Ovary (tissue), 10 donors: ENCODE measurements at regions of chr3 and their contacts with region 1.

Region 1: DNA sequence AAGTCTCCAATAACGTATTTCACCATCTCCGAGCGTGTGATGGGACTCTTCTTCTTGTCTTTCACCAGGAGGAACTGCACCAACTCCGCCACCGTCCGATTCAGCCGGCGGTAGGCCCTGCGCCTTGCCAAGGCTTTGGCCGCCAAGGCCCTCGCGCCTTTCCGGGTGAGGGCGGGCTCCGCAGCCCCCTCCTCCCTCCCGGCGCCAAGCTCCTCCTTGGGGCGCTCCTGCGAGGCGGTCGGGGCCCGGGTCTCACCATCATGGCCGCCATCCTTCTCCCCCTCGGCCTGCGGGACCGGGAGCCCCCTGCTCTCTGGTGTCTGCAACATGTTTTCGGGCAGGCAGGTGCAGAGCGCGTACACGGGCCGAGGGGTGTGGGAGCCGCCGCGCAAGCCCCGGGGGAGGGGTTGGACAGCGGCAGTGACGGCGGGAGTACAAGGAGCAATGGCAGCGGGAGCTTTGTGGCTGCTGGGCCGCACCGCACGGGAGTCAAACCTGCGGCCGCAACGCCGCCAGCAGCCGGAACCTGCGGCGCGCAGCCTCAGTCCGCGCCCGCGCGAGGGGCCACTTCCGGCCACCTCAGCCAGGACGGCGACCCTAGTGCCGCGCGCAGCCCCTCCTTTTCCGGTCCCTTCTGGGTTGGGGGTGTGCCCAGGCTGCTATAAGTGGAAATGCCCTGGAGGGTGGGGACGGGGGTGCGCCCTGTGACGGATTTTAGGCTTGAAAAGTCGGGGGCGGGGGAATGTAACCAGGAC is at the start of gene MAGEF1:
- DNase-seq: peak; percentile 79 to 88 (median 84)
- H3K4me3 ChIP-seq: peak within 1 kb of the TSS; percentile 68
- H3K27ac ChIP-seq: peak within 1 kb of the TSS; percentile 88 to 89
- H3K4me1 ChIP-seq: peaks cover 15% of the 10 kb centered on the region
- H3K27me3 ChIP-seq: no peaks in the 10 kb centered on the region
- CTCF ChIP-seq: peak in 2 of 3 donors; percentile 28
- EP300 ChIP-seq: no peak
- POLR2A ChIP-seq: peak; percentile 62
- total RNA-seq, gene MAGEF1: 28.3 to 48.6 (median 39.7) TPM

Region 2: DNA sequence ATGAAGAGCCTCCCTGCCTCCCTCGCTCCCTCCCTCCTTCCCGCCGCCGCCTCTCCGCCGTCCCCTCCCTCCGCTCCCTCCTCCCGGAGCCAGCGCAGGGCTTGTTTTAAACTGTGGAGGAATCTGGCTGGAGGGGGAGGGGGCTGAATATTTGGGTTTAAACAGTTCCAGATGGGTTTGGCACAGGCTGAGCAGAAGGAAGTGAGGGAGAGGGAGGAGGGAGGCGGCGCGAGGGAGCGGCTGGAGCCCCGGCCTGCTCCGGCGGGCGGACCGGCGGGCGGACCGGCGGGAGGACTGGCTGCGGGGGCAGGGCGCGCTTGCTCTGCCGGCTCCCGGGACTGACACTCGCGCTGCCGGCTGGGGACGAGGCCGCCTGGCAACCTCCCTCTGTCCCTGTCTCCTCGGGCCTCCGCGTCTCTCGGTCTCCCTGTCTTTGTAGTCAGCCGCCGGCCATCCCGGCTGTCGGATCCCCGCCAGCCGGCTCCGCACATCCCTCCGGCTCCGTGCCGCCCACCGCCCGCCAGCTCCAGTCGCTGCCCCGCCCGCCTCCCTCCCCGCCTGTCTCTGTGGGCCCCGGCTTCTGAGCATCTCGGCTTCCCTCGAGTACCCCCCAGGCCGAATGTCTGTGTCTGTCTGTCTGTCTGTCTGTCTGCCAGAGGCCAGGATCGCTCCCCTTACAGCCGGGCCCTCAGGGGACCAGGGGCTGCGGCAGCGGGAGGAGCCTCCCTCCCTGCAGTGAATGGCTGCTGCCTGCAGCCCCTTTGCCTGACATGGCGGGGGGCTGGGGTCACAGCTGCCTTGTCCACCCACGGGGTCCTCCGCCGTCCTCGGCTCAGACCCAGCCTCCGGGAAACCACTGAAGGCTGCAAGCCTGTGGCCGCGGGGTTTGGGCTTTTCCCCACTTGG is 142.5 kb before region 1 on chr3:
- intact Hi-C with region 1: loop called in 1 of 4 experiments (anchors 5 kb)
- DNase-seq: peak; percentile 91 to 95 (median 93)
- H3K4me3 ChIP-seq: peak overlapping the region; percentile 51
- H3K27ac ChIP-seq: peak overlapping the region in 1 of 2 donors; percentile 66
- H3K4me1 ChIP-seq: peaks cover 39% of the 10 kb centered on the region
- H3K27me3 ChIP-seq: no peaks in the 10 kb centered on the region
- CTCF ChIP-seq: no peak
- EP300 ChIP-seq: no peak
- POLR2A ChIP-seq: no peak

Region 3: GRCh38 chr3:184592371-184593219 is 119.1 kb before region 1 on chr3:
- intact Hi-C with region 1: loop called in 1 of 4 experiments (anchors 10 kb)
- DNase-seq: peak; percentile 84 to 94 (median 91)
- H3K4me3 ChIP-seq: no peak overlapping the region
- H3K27ac ChIP-seq: peak overlapping the region; percentile 55 to 88
- H3K4me1 ChIP-seq: peaks cover 14% of the 10 kb centered on the region
- H3K27me3 ChIP-seq: no peaks in the 10 kb centered on the region
- CTCF ChIP-seq: no peak
- EP300 ChIP-seq: no peak
- POLR2A ChIP-seq: no peak

Region 4: GRCh38 chr3:184636741-184637316 is 74.8 kb before region 1 on chr3:
- intact Hi-C with region 1: no loop called
- DNase-seq: no peak
- H3K4me3 ChIP-seq: no peak overlapping the region
- H3K27ac ChIP-seq: no peak overlapping the region
- H3K4me1 ChIP-seq: no peaks in the 10 kb centered on the region
- H3K27me3 ChIP-seq: no peaks in the 10 kb centered on the region
- CTCF ChIP-seq: no peak
- EP300 ChIP-seq: no peak
- POLR2A ChIP-seq: no peak

Region 5: GRCh38 chr3:184765730-184766074 is 54.0 kb after region 1 on chr3:
- intact Hi-C with region 1: loop called in 1 of 4 experiments (anchors 10 kb)
- DNase-seq: no peak
- H3K4me3 ChIP-seq: no peak overlapping the region
- H3K27ac ChIP-seq: no peak overlapping the region
- H3K4me1 ChIP-seq: peaks cover 6% of the 10 kb centered on the region
- H3K27me3 ChIP-seq: no peaks in the 10 kb centered on the region
- CTCF ChIP-seq: no peak
- EP300 ChIP-seq: no peak
- POLR2A ChIP-seq: no peak